Ascending aorta (tissue), 2 donors: ENCODE measurements at regions of chr19 and their contacts with region 1.

Region 1: DNA sequence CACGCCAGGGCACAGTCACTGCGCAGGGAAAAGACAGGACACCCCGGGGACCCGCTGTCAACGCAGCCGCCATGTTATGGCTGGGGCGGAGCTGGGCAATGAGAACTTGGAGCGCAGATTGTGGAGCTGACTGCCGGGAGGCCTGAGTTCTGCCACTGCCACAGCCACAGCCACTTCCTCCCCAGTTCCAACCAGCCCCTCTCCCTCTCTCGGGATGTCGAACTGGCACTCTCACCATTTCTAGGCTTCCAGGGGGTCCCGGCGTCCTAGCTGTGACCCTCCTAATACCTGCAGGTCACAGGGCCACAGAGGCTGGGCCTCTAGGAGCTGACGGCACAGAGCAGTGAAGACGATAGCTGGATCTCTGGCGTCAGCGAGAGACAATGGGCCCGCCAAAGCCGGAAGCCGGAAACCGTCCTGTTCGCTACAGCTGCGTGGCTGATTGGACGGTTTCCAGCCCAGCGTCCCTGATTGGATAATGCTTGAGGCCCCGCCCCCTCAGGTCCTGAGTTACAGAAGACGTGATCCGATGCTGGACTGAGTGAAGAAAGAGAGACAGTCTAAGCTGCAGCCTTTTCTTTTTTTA is at the start of gene ZNF506:
- DNase-seq: peak; percentile 96 to 99
- H3K4me3 ChIP-seq: peak within 1 kb of the TSS; percentile 66 to 69
- H3K27ac ChIP-seq: peak within 1 kb of the TSS; percentile 83 to 93
- H3K4me1 ChIP-seq: no peaks in the 10 kb centered on the region
- H3K27me3 ChIP-seq: no peaks in the 10 kb centered on the region
- CTCF ChIP-seq: no peak
- total RNA-seq, gene ZNF506: 22.4 TPM

Region 2: DNA sequence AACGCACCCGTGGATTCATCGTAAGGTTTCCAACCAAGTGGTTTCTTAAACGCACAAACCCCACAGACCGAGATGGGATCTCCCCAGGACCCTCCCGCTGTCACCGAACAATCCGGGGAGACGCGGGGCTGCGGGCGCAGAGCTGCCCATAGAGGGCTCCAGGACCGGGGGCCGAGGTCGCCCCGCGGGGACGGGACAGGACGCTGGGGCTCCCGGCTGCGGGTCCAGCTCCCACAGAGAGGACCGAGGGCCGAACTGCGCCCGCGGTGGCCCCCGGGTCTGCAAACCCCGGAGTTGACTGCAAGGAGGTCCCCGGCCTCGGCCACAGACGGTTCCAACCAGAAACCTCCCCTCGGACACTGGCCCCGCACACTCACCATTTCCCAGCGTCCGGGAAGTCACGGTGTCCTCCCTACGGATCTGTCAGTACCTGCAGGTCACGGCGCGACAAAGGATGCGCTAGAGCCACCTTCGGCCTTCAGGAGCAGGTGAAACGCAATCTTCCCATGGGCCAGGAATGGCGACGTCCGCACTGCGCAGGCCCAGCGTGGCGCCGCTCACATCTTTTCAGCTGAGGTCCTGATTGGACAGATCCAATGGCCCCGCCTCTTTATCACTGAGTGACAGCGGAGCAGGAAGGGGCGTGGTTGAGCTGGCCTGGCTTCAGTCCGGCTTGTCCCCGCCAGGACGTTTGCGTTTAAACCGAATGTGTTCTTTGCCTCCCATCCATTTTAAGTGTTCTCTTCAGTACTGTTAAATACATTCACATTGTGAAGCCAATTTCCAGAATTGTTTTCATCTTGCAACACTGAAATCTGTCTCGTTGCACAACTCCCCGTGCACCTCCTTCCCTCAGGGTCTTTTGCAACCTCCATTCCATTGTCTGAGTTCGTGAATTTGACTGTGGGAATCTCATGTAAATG is 88.6 kb before region 1 on chr19 and contains the start of gene ZNF14:
- intact Hi-C with region 1: loop called (anchors 5 kb)
- DNase-seq: peak; percentile 74 to 96
- H3K4me3 ChIP-seq: peak within 1 kb of the TSS; percentile 91 to 95
- H3K27ac ChIP-seq: peak within 1 kb of the TSS; percentile 72 to 79
- H3K4me1 ChIP-seq: no peaks in the 10 kb centered on the region
- H3K27me3 ChIP-seq: no peaks in the 10 kb centered on the region
- CTCF ChIP-seq: peak in 2 of 3 experiments; percentile 20 to 24
- total RNA-seq, gene ZNF14: 4.8 TPM

Region 3: GRCh38 chr19:19776041-19777008 is 45.1 kb before region 1 on chr19:
- intact Hi-C with region 1: loop called (anchors 1 kb)
- DNase-seq: peak; percentile 97 to 100
- H3K4me3 ChIP-seq: peak overlapping the region; percentile 71 to 82
- H3K27ac ChIP-seq: peak overlapping the region; percentile 50 to 56
- H3K4me1 ChIP-seq: peaks cover 5 to 11% of the 10 kb centered on the region in 2 donors
- H3K27me3 ChIP-seq: no peaks in the 10 kb centered on the region
- CTCF ChIP-seq: no peak

Region 4: GRCh38 chr19:19865739-19866481 is 44.5 kb after region 1 on chr19 and contains the start of gene ZNF253:
- intact Hi-C with region 1: loop called (anchors 1 kb)
- DNase-seq: peak; percentile 94 to 98
- H3K4me3 ChIP-seq: peak within 1 kb of the TSS; percentile 79 to 93
- H3K27ac ChIP-seq: peak within 1 kb of the TSS; percentile 89 to 96
- H3K4me1 ChIP-seq: peaks cover 3 to 6% of the 10 kb centered on the region in 2 donors
- H3K27me3 ChIP-seq: no peaks in the 10 kb centered on the region
- CTCF ChIP-seq: no peak
- total RNA-seq, gene ZNF253: 1.8 TPM

Region 5: GRCh38 chr19:19900729-19901444 is 79.4 kb after region 1 on chr19 and contains the start of gene ZNF93:
- intact Hi-C with region 1: loop called (anchors 2 kb)
- DNase-seq: peak; percentile 92 to 97
- H3K4me3 ChIP-seq: peak within 1 kb of the TSS; percentile 80 to 82
- H3K27ac ChIP-seq: peak within 1 kb of the TSS; percentile 68 to 77
- H3K4me1 ChIP-seq: peaks cover 0 to 2% of the 10 kb centered on the region in 2 donors
- H3K27me3 ChIP-seq: no peaks in the 10 kb centered on the region
- CTCF ChIP-seq: no peak
- total RNA-seq, gene ZNF93: 2.9 TPM